Activated B cell treated with CpG ODN at 0.5 μM for 24 hours (primary cell): ENCODE measurements at regions of chr5 and their contacts with region 1.

Region 1: GRCh38 chr5:17132444-17133083 is 84.9 kb upstream of the BASP1 start:
- DNase-seq: no peak
- ATAC-seq: no peak
- H3K4me3 Mint-ChIP-seq: no peak overlapping the region
- H3K27ac Mint-ChIP-seq: no peak overlapping the region
- H3K4me1 Mint-ChIP-seq: no peaks in the 10 kb centered on the region
- H3K27me3 Mint-ChIP-seq: peaks cover 17% of the 10 kb centered on the region
- CTCF ChIP-seq: peak; percentile 23

Region 2: GRCh38 chr5:16784843-16785791 is 347.4 kb before region 1 on chr5:
- CTCF ChIA-PET with region 1: no interaction called
- POLR2A ChIA-PET with region 1: no interaction called
- intact Hi-C with region 1: no loop called
- DNase-seq: no peak
- ATAC-seq: peak; percentile 58
- H3K4me3 Mint-ChIP-seq: no peak overlapping the region
- H3K27ac Mint-ChIP-seq: no peak overlapping the region
- H3K4me1 Mint-ChIP-seq: peaks cover 7% of the 10 kb centered on the region
- H3K27me3 Mint-ChIP-seq: peaks cover 8% of the 10 kb centered on the region
- CTCF ChIP-seq: no peak

Region 3: DNA sequence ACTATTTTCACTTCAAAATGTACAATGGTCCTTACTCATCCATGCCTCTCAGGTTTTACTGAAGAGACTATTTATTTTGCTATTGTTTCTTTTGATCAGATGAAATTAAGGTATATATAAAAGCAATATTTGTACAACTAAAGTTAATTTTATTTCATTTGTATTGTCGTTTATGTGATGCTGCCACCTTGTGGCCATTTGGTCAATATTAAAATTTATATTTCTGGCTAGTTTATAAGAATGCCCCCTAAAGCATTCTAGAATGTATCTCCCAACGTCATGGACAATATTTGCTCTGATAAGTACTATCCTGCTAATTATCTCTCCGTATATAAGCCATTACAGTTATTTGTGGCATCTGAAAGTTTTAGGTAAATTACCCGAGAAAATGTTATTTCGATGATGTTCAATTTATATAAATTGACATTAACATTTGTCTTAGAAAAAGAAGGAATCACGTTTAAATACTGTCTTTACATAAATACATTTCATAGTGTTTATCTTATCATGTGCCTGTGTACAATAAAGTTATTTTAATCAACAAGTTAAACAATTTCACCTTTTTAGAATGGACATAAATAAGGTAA is 1181.7 kb after region 1 on chr5:
- CTCF ChIA-PET with region 1: interaction called, 5 read pairs
- POLR2A ChIA-PET with region 1: no interaction called
- intact Hi-C with region 1: loop called (anchors 1 kb)
- DNase-seq: no peak
- ATAC-seq: no peak
- H3K4me3 Mint-ChIP-seq: no peak overlapping the region
- H3K27ac Mint-ChIP-seq: no peak overlapping the region
- H3K4me1 Mint-ChIP-seq: no peaks in the 10 kb centered on the region
- H3K27me3 Mint-ChIP-seq: no peaks in the 10 kb centered on the region
- CTCF ChIP-seq: no peak